Right ventricle myocardium inferior (tissue), 1 donor: ENCODE measurements at regions of chr4 and their contacts with region 1.

Region 1: DNA sequence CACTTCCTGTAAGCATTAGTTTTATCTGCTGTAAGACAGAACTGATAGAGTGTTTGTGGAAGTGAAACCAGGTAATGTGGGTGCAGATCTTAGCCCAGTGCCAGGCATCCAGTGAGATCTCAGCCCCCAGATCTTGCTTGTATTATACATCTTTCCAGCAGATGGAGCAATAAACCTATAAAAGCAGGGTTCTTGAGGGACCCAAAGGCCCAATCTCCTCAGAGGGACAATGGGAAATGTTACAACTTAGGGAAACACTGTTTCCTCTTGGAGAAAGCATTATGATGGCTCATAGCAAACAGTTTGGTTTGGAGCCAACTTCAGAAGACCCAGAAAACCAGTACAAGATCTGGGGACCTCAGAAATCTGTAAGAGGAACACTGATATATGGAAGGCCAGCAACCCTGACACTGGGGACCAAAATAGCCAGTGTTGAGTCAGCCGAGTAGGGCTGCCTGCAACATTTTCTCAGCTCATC is 206.3 kb downstream of the SLC7A11 start:
- DNase-seq: no peak
- ATAC-seq: peak; percentile 80

Region 2: GRCh38 chr4:138021139-138021830 is 14.5 kb before region 1 on chr4:
- intact Hi-C with region 1: no loop called
- DNase-seq: no peak
- ATAC-seq: no peak

Region 3: GRCh38 chr4:138090150-138090917 is 54.5 kb after region 1 on chr4:
- intact Hi-C with region 1: loop called (anchors 2 kb)
- DNase-seq: no peak
- ATAC-seq: peak; percentile 76

Region 4: GRCh38 chr4:138182838-138183426 is 147.1 kb after region 1 on chr4:
- intact Hi-C with region 1: loop called (anchors 1 kb)
- DNase-seq: no peak
- ATAC-seq: peak; percentile 44

Region 5: GRCh38 chr4:138348055-138348454 is 312.2 kb after region 1 on chr4:
- intact Hi-C with region 1: no loop called
- DNase-seq: no peak
- ATAC-seq: no peak

Region 6: DNA sequence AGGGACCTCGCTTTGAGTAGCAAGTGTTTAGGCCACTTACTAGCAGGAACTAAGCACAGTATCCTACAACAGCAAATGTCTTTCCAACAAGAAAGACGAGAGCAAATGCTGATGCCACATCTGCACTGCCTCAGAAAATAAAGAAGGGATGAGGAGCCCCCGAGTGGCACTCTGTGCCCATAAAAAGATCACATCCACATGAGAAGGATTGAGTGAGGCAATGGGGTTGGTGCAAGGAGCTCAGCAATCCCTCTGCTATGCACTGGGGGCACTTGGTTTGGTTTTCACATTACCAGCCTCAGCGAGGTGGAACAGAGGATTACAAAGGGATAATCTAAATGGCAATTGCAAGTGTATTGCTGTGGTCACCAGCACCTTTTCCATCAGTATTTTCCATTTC is 459.1 kb after region 1 on chr4:
- intact Hi-C with region 1: loop called (anchors 5 kb)
- DNase-seq: no peak
- ATAC-seq: peak; percentile 60

Region 7: DNA sequence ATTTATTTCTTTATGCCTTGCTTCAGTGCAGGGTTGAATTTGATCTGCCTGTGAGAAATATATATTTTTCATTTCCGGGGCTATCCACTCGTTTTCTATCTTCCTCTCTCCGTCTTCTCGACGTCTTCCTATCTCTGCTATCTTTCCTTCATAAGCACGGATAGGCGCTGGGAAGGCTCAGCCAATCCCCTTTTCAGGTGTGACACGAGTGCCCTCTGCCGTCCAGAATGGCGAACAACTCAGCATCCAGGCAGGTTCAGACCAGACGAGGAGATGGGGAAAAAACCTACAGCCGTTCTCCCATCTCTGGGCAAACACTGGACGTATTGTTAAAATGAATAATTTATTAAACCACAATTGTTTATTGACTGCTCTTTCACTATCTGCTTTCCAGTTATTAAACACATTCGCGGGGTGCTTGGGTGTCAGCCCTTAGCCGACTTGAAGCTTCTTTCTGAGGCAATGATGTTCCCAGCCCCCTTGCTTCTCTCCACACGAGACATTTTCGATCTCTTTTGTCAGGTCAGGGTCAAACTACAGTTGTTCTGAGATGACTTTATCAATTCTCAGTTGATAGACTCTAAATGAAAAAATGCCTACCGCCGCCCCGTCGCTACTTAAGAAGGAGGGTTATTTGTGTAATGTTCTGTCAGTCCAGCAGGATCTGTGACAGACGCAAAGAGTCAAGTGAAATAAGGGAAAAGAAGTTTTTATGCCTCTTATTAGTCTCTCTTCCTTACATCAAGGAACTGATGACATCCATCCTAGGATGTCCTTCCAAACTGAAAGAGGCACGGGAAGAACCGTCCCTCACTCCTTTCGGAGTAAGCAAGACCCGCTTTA is 883.5 kb after region 1 on chr4:
- intact Hi-C with region 1: loop called (anchors 10 kb)
- DNase-seq: peak; percentile 85
- ATAC-seq: peak; percentile 93